Mammary epithelial cell (primary cell): ENCODE measurements at regions of chr1 and their contacts with region 1.

Region 1: GRCh38 chr1:117758444-117759316 is 152.8 kb downstream of the TENT5C start:
- DNase-seq: peak; percentile 68
- H3K4me3 ChIP-seq: peak overlapping the region; percentile 31 to 51 (median 46)
- H3K27ac ChIP-seq: no peak overlapping the region
- H3K4me1 ChIP-seq: peaks cover 7% of the 10 kb centered on the region
- H3K27me3 ChIP-seq: no peaks in the 10 kb centered on the region
- CTCF ChIP-seq: peak; percentile 82 to 86

Region 2: GRCh38 chr1:117067533-117068370 is 690.9 kb before region 1 on chr1:
- CTCF ChIA-PET with region 1: no interaction called
- dilution Hi-C with region 1: no loop called
- in situ Hi-C with region 1: no loop called
- intact Hi-C with region 1: loop called (anchors 5 kb)
- DNase-seq: peak; percentile 31
- H3K4me3 ChIP-seq: no peak overlapping the region
- H3K27ac ChIP-seq: no peak overlapping the region
- H3K4me1 ChIP-seq: no peaks in the 10 kb centered on the region
- H3K27me3 ChIP-seq: no peaks in the 10 kb centered on the region
- CTCF ChIP-seq: peak; percentile 73 to 87

Region 3: GRCh38 chr1:117512743-117513321 is 245.8 kb before region 1 on chr1:
- CTCF ChIA-PET with region 1: no interaction called
- dilution Hi-C with region 1: no loop called
- in situ Hi-C with region 1: no loop called
- intact Hi-C with region 1: loop called (anchors 1 kb)
- DNase-seq: peak; percentile 6
- H3K4me3 ChIP-seq: no peak overlapping the region
- H3K27ac ChIP-seq: no peak overlapping the region
- H3K4me1 ChIP-seq: no peaks in the 10 kb centered on the region
- H3K27me3 ChIP-seq: no peaks in the 10 kb centered on the region
- CTCF ChIP-seq: peak; percentile 46 to 63

Region 4: GRCh38 chr1:117534995-117535467 is 223.6 kb before region 1 on chr1:
- CTCF ChIA-PET with region 1: no interaction called
- dilution Hi-C with region 1: no loop called
- in situ Hi-C with region 1: loop called in 1 of 2 experiments (anchors 10 kb)
- intact Hi-C with region 1: loop called (anchors 1 kb)
- DNase-seq: peak; percentile 51
- H3K4me3 ChIP-seq: no peak overlapping the region
- H3K27ac ChIP-seq: no peak overlapping the region
- H3K4me1 ChIP-seq: no peaks in the 10 kb centered on the region
- H3K27me3 ChIP-seq: no peaks in the 10 kb centered on the region
- CTCF ChIP-seq: peak; percentile 50 to 68

Region 5: DNA sequence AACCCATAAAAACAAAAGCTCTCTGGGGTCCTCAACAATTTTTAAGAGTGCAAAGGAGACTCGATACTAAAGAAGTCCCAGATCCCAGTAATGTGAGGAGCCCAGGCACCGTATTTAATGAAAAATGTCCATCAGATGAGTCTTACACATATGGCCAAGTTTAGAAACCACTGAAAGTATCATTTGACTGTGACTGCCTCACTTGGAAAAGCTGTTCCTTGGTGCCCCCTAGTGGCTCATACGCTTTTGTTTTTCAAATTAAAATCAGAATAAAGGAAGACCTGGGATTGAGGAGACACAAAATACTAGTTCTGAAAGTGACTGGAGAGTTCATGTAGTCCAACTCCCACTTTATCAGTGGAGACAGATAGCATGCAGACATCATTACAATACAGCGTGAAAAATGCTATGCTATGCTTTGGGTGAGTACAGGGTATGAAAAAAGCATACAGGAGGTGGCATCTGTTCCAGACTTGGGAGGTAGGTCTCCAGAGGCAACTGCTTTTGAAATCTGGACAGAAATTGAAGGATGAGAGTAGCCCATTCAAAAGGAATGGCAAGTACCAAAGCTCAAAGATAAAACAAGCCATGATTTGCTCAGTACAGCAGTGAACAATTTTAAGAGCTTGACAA is 136.9 kb after region 1 on chr1:
- CTCF ChIA-PET with region 1: no interaction called
- dilution Hi-C with region 1: no loop called
- in situ Hi-C with region 1: no loop called
- intact Hi-C with region 1: loop called (anchors 1 kb)
- DNase-seq: peak; percentile 68
- H3K4me3 ChIP-seq: no peak overlapping the region
- H3K27ac ChIP-seq: no peak overlapping the region
- H3K4me1 ChIP-seq: no peaks in the 10 kb centered on the region
- H3K27me3 ChIP-seq: no peaks in the 10 kb centered on the region
- CTCF ChIP-seq: peak; percentile 71 to 80